OCI-LY7 (cell line): ENCODE measurements at regions of chr12 and their contacts with region 1.

Region 1: DNA sequence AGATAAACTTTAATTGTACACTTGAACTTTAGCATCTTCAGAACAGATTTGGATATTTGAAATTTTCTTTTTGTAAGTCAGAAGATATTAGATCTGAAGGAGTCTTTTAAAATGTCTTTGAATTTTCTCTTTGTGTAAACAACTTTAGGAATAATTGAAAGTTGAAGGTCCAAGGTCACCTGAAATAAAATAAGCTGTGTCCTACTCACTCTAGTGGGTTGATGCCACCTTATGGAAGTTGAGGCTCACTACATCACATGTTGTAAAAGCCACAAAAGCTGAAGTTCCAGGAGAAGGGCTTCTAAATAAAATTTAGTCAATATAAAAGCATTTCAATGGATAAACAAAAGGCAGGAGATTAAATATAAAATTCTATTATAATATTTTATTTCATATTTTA is 122.0 kb upstream of the ATXN7L3B start:
- DNase-seq: peak; percentile 41
- H3K4me3 ChIP-seq: no peak overlapping the region
- H3K27ac ChIP-seq: no peak overlapping the region
- H3K4me1 ChIP-seq: no peaks in the 10 kb centered on the region
- CTCF ChIP-seq: peak; percentile 77

Region 2: DNA sequence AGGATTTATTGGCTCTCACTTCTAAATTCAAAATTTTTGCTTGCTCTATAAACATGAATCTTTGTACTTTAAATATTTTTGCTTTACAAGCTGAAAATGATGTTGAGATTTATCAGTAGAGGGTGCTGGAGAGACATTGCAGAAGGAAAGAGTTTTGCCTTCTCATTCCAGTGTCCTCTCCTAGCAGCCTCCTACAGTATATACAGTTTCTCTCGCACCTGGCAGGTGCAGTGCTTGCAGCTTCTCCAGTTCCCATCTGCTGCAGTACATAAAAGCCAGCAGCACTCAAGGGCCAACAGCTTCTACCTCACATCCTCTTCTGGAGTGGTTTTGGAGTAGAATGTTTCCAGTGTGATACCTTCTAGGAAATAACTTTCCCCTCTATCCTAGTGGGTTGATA is 479.8 kb before region 1 on chr12:
- CTCF ChIA-PET with region 1: no interaction called
- POLR2A ChIA-PET with region 1: no interaction called
- intact Hi-C with region 1: loop called (anchors 5 kb)
- DNase-seq: peak; percentile 14
- H3K4me3 ChIP-seq: no peak overlapping the region
- H3K27ac ChIP-seq: no peak overlapping the region
- H3K4me1 ChIP-seq: no peaks in the 10 kb centered on the region
- CTCF ChIP-seq: peak; percentile 64

Region 3: GRCh38 chr12:74111688-74112360 is 303.8 kb before region 1 on chr12:
- CTCF ChIA-PET with region 1: no interaction called
- POLR2A ChIA-PET with region 1: no interaction called
- intact Hi-C with region 1: loop called (anchors 5 kb)
- DNase-seq: peak; percentile 11
- H3K4me3 ChIP-seq: no peak overlapping the region
- H3K27ac ChIP-seq: no peak overlapping the region
- H3K4me1 ChIP-seq: no peaks in the 10 kb centered on the region
- CTCF ChIP-seq: peak; percentile 65

Region 4: DNA sequence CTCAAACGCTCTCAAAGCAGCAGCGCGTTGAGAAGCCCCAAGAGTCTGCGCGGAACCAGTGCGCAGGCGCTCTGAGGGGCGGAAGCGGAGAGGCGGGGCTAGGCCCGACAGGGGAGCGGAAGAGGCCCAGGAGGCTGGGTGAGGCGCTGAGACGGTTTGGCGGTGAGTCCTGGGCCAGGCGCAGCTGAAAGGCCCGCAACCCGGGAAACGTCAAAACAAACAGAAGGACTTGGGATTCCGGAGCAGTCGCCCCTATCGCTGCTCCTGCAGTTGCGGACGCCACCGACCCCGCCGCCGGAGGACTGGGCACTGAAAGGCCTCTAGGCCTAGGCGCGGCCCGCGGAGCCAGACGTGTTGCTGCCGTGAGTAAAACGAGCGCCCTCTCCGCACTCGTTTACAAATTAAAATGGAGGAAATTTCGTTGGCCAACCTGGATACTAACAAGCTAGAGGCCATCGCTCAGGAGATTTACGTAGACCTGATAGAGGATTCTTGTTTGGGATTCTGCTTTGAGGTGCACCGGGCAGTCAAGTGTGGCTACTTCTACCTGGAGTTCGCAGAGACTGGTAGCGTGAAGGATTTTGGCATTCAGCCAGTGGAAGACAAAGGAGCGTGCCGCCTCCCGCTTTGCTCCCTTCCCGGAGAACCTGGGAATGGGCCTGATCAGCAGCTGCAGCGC is 122.2 kb after region 1 on chr12 and contains the start of gene ATXN7L3B:
- CTCF ChIA-PET with region 1: no interaction called
- POLR2A ChIA-PET with region 1: no interaction called
- intact Hi-C with region 1: loop called (anchors 5 kb)
- DNase-seq: peak; percentile 95
- H3K4me3 ChIP-seq: peak within 1 kb of the TSS; percentile 95
- H3K27ac ChIP-seq: peak within 1 kb of the TSS; percentile 94
- H3K4me1 ChIP-seq: peaks cover 38% of the 10 kb centered on the region
- CTCF ChIP-seq: no peak
- total RNA-seq, gene ATXN7L3B: 21.5 and 22.4 TPM in 2 replicates

Region 5: DNA sequence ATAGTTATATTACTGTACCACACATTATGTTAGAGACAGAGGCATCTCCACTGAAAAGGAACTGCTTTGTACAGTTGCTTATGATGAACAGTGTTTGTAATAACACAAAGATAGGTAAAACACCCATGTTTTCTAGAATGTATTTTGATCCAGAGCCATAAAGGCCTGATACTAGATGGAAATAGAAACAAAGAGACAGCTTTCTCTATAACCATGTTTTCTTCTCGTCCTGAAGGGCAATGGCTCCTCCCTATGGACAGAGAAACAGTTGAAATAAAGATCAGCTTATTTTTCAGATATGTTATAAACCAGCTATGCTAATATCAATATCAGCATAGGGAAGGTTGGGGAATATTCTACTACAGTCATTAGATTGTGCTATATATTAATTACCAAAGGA is 231.2 kb after region 1 on chr12:
- CTCF ChIA-PET with region 1: no interaction called
- POLR2A ChIA-PET with region 1: interaction called, 3 read pairs
- intact Hi-C with region 1: loop called (anchors 2 kb)
- DNase-seq: peak; percentile 28
- H3K4me3 ChIP-seq: no peak overlapping the region
- H3K27ac ChIP-seq: no peak overlapping the region
- H3K4me1 ChIP-seq: peaks cover 6% of the 10 kb centered on the region
- CTCF ChIP-seq: peak; percentile 75